Heart right ventricle (tissue), 16 donors: ENCODE measurements at regions of chr13 and their contacts with region 1.

Region 1: DNA sequence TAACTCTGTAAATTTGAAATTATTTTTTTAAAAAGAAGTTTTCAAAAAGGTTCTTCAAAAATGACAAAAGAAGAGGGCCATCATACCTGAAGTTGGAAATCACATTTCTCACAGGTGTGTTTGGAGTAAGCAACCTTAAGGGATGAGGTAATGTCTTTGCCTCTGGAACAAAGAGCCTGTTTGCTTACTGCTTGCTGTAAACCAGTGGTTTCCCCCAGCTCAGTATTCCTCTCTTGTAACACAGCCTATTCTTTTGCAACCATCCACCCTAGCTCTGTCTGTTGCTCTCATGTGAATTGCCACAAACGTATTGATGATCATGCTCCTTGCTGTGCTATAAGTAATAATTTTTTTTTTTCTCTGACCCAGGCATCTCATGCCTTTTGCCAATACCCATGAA is 38.1 kb downstream of the UCHL3 start:
- DNase-seq: no peak
- ATAC-seq: no peak
- H3K4me3 ChIP-seq: no peak overlapping the region
- H3K27ac ChIP-seq: no peak overlapping the region
- H3K4me1 ChIP-seq: no peaks in the 10 kb centered on the region
- H3K27me3 ChIP-seq: no peaks in the 10 kb centered on the region
- CTCF ChIP-seq: no peak

Region 2: GRCh38 chr13:74990992-74991391 is 596.7 kb before region 1 on chr13:
- intact Hi-C with region 1: loop called in 1 of 10 experiments (anchors 5 kb)
- DNase-seq: no peak
- ATAC-seq: no peak
- H3K4me3 ChIP-seq: no peak overlapping the region
- H3K27ac ChIP-seq: no peak overlapping the region
- H3K4me1 ChIP-seq: no peaks in the 10 kb centered on the region
- H3K27me3 ChIP-seq: no peaks in the 10 kb centered on the region
- CTCF ChIP-seq: no peak

Region 3: DNA sequence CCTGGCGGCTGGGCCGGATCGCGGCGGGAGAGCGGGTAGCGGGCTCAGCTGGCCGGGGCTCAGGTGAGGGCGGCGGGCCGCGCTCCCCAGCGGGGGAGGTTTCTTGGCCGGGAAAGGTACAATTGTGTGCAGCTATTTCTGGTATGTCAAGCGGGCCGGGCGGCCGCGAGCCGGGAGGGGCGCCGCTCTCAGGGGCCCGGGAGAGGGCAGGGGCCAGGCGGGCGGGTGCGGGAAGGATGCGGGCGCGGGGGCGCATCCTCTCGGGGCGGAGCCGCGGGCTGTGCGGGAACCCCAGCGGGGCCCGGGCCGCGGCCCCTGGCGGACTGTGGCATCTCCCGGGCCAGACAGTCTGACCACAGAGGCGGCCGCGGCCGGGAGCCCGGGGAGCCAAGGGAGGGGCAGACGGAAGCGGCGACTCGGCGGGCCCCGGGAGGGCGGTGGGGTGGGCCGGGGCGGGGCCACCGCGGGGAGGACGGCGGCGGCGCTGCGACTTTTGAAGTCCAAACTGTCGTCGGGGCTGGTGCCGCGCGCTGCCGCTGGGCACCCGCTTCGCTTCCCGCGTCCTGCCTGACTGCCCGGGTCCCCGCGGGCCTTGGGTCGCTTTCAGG is 48.3 kb after region 1 on chr13 and contains the start of gene LMO7:
- intact Hi-C with region 1: no loop called
- DNase-seq: peak; percentile 37 to 61
- ATAC-seq: peak; percentile 62 to 89 (median 76)
- H3K4me3 ChIP-seq: peak within 1 kb of the TSS; percentile 50 to 77 (median 71)
- H3K27ac ChIP-seq: peak within 1 kb of the TSS in 6 of 10 donors; percentile 41 to 71 (median 58)
- H3K4me1 ChIP-seq: peaks cover 4 to 26% (median 8%) of the 10 kb centered on the region in 9 donors
- H3K27me3 ChIP-seq: peaks cover 0 to 37% (median 0%) of the 10 kb centered on the region in 7 donors
- CTCF ChIP-seq: no peak
- total RNA-seq, gene LMO7: 302 to 600 (median 511) TPM